ENCODE measurements at regions of chr5 and their contacts with region 1.

Region 1: GRCh38 chr5:149834246-149834855 is 104.2 kb downstream of the PPARGC1B start:
- ATAC-seq: peak in 6 of 8 experiments; percentile 30 to 73 (median 55)
- H3K4me3 ChIP-seq: no peak overlapping the region
- H3K27ac ChIP-seq: no peak overlapping the region
- H3K4me1 ChIP-seq: no peaks in the 10 kb centered on the region

Region 2: DNA sequence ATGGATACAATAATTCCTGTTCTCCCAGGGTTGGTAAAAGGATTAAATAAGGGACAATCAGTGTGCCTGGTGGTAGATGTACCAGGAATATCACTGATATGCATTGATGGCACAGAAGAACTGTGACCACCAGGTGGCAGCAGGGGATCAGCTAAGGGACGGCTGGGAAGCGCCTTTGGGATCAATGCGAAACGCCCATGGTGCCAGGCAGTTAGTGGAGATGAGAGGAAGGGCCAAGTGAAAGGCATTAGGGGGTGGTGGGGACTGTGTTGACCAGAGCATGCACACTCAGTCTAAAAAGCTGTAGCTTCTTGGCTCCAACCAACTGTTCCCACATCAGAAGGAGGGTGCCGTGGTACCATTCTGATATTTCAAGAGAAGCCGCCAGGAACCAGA is 197.5 kb before region 1 on chr5:
- in situ Hi-C with region 1: loop called in 7 of 9 experiments (anchors 5 to 25 kb)
- ATAC-seq: peak; percentile 75 to 96 (median 88)
- H3K4me3 ChIP-seq: no peak overlapping the region
- H3K27ac ChIP-seq: no peak overlapping the region
- H3K4me1 ChIP-seq: peaks cover 3 to 14% of the 10 kb centered on the region in 2 donors

Region 3: GRCh38 chr5:149667084-149667828 is 167.1 kb before region 1 on chr5:
- in situ Hi-C with region 1: loop called in 2 of 9 experiments (anchors 10 kb)
- ATAC-seq: peak in 3 of 8 experiments; percentile 42 to 57 (median 54)
- H3K4me3 ChIP-seq: no peak overlapping the region
- H3K27ac ChIP-seq: no peak overlapping the region
- H3K4me1 ChIP-seq: no peaks in the 10 kb centered on the region

Region 4: DNA sequence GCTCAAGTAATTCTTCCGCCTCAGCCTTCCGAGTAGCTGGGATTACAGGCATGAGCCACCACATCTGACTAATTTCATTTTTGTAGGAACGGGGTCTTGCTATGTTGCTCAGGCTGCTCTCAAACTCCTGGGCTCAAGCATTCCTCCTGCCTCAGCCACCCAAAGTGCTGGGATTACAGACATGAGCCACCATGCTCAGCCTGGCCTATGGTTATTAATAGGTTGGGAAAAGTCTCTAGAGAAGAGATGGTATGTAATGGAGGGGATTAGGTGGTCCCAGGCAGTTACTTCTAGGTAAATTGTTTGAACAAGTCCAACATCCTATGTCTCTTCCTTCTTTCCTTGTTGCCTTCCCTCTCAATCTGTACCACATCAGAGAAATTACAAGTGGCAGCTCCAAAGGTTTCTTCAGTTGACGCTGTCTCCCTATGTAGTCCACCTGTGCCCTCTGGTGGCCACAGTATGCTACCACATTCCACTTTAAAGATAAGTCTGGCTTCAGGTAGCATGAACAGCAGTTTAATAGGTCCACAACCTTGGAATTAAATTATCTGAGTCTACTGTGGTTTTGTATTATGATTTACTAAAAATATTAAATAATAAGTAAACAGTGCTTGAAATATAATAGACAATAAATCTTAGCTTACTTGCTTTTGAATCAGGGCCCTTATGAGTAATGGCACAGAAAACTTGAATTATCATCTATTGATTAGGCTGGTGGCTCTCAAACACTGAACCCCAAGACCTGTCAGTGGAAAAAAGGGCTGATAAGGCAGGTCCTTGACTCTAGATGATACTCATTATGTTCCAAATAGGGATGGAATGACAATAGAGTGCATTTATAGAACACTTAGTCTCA is 156.4 kb after region 1 on chr5:
- in situ Hi-C with region 1: loop called in 7 of 9 experiments (anchors 10 to 25 kb)
- ATAC-seq: peak; percentile 74 to 90 (median 78)
- H3K4me3 ChIP-seq: no peak overlapping the region
- H3K27ac ChIP-seq: no peak overlapping the region
- H3K4me1 ChIP-seq: peaks cover 0 to 10% of the 10 kb centered on the region in 2 donors

Region 5: GRCh38 chr5:150066901-150067396 is 232.6 kb after region 1 on chr5:
- in situ Hi-C with region 1: no loop called
- ATAC-seq: no peak
- H3K4me3 ChIP-seq: no peak overlapping the region
- H3K27ac ChIP-seq: no peak overlapping the region
- H3K4me1 ChIP-seq: no peaks in the 10 kb centered on the region

Measured in motor neuron (in vitro differentiated cells).